Activated B cell treated with CpG ODN at 0.5 μM for 24 hours (primary cell): ENCODE measurements at regions of chrX and their contacts with region 1.

Region 1: DNA sequence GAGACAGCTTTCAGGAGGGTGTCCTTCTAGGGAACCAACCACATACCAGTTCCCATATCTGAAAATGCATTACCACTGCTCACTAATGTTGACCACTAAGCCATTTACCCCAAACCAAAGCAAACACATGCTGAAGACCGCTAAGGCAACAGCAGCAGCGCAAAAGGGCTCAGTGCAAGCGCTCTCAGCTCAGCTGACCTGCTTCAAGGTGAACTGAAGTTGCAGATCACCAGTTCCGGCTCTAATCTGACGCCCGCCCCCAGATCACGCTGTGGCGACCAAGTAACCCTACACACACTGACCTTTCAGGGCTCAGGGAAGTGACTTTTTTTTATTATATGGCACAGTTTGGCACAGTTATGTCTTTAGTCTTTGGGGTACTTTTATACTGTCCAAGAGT is 5.8 kb downstream of the MECP2 start:
- DNase-seq: no peak
- ATAC-seq: no peak
- H3K4me3 Mint-ChIP-seq: no peak overlapping the region
- H3K27ac Mint-ChIP-seq: no peak overlapping the region
- H3K4me1 Mint-ChIP-seq: peaks cover 53% of the 10 kb centered on the region
- H3K27me3 Mint-ChIP-seq: no peaks in the 10 kb centered on the region
- CTCF ChIP-seq: no peak

Region 2: GRCh38 chrX:153885968-153886903 is 205.4 kb before region 1 on chrX and contains the start of gene L1CAM:
- CTCF ChIA-PET with region 1: no interaction called
- POLR2A ChIA-PET with region 1: no interaction called
- intact Hi-C with region 1: no loop called
- DNase-seq: no peak
- ATAC-seq: peak; percentile 20
- H3K4me3 Mint-ChIP-seq: peak within 1 kb of the TSS; percentile 65
- H3K27ac Mint-ChIP-seq: peak within 1 kb of the TSS; percentile 35
- H3K4me1 Mint-ChIP-seq: peaks cover 29% of the 10 kb centered on the region
- H3K27me3 Mint-ChIP-seq: no peaks in the 10 kb centered on the region
- CTCF ChIP-seq: no peak
- total RNA-seq, gene L1CAM: 7.3 and 11.0 TPM in 2 replicates

Region 3: DNA sequence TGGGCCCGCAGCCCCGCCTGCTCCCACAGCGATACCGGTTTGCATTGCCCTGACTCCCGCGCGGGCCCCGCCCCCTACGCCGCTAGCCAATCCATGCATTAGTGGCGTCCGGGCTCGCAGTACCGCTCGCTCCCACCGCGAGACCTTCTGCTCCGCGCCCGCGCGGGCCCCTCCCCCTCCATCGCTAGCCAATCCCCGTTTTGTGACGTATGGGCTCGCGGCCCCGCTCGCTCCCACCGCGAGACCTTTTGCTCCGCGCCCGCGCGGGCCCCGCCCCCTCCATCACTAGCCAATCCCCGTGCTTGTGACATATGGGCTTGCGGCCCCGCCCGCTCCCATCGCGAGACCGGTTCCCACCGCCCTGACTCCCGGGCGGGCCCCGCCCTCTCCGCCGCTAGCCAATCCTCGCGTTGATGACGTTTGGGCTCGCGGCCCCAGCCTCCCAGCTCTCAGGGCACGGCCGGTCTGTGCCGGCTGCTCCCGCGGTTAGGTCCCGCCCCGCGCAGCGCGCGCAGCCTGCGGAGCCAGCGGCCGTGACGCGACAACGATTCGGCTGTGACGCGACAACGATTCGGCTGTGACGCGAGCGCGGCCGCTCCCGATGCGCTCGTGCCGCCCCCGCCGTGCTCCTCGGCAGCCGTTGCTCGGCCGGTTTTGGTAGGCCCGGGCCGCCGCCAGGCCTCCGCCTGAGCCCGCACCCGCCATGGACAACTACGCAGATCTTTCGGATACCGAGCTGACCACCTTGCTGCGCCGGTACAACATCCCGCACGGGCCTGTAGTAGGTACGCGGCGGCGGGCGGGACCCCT is 287.3 kb after region 1 on chrX and contains the start of gene EMD:
- CTCF ChIA-PET with region 1: interaction called, 3 read pairs
- POLR2A ChIA-PET with region 1: interaction called, 15 read pairs
- intact Hi-C with region 1: loop called (anchors 5 kb)
- DNase-seq: peak; percentile 87
- ATAC-seq: peak; percentile 83
- H3K4me3 Mint-ChIP-seq: peak within 1 kb of the TSS; percentile 83
- H3K27ac Mint-ChIP-seq: peak within 1 kb of the TSS; percentile 83
- H3K4me1 Mint-ChIP-seq: peaks cover 18% of the 10 kb centered on the region
- H3K27me3 Mint-ChIP-seq: no peaks in the 10 kb centered on the region
- CTCF ChIP-seq: no peak
- total RNA-seq, gene EMD: 68.4 and 70.2 TPM in 2 replicates